ENCODE measurements at regions of chr3 and their contacts with region 1.

Region 1: GRCh38 chr3:49339945-49340800 is at the start of gene USP4:
- DNase-seq: peak; percentile 91 to 93 (median 91)
- H3K4me3 ChIP-seq: peak within 1 kb of the TSS; percentile 63 to 81
- H3K4me3 Mint-ChIP-seq: peak within 1 kb of the TSS; percentile 91 to 97 (median 94)
- H3K27ac ChIP-seq: peak within 1 kb of the TSS; percentile 92
- H3K27ac Mint-ChIP-seq: peak within 1 kb of the TSS; percentile 96 to 100 (median 98)
- H3K4me1 ChIP-seq: peaks cover 56% of the 10 kb centered on the region
- H3K4me1 Mint-ChIP-seq: peaks cover 27 to 51% (median 41%) of the 10 kb centered on the region in 4 donors
- H3K27me3 ChIP-seq: no peaks in the 10 kb centered on the region
- H3K27me3 Mint-ChIP-seq: no peaks in the 10 kb centered on the region
- total RNA-seq, gene USP4: 111 to 114 TPM

Region 2: DNA sequence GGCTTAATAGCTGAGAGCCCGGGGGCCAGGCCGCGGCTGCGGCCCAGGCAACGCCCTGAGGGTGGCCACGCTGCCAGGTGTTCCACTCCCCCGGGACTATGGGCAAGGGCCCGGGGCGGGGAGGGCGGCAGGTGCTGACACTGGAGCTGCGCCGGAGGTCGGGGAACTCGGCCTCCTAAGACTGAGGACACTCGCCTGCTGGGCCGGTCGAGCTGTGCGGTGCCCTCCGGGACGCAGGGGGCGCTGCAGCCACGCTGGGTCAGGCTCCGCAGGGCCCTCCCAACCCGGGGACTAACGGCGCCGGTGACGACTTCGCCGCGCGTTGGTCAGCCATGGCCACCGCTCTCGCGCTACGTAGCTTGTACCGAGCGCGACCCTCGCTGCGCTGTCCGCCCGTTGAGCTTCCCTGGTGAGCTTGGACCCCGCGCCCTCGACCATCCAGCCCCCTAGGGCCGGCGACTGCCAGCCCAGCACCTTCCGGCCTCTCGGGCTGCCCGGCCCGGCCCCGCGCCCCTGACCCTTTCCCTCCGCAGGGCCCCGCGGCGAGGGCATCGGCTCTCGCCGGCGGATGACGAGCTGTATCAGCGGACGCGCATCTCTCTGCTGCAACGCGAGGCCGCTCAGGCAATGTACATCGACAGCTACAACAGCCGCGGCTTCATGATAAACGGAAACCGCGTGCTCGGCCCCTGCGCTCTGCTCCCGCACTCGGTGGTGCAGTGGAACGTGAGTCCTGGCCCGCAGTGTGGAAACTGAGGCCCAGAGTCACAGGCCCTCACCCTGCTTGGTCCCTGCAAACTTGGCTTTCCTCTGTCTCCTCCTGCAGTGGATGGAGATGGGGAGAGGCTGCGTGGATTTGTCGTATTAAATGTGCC is 318.1 kb before region 1 on chr3 and contains the start of gene NDUFAF3:
- CTCF ChIA-PET with region 1: no interaction called
- POLR2A ChIA-PET with region 1: interaction called, 24 read pairs
- intact Hi-C with region 1: loop called (anchors 10 kb)
- DNase-seq: peak; percentile 89 to 91 (median 90)
- H3K4me3 ChIP-seq: peak within 1 kb of the TSS; percentile 65 to 98
- H3K4me3 Mint-ChIP-seq: peak within 1 kb of the TSS; percentile 94 to 98 (median 96)
- H3K27ac ChIP-seq: peak within 1 kb of the TSS; percentile 97
- H3K27ac Mint-ChIP-seq: peak within 1 kb of the TSS; percentile 93 to 99 (median 98)
- H3K4me1 ChIP-seq: peaks cover 43% of the 10 kb centered on the region
- H3K4me1 Mint-ChIP-seq: peaks cover 16 to 74% (median 41%) of the 10 kb centered on the region in 4 donors
- H3K27me3 ChIP-seq: no peaks in the 10 kb centered on the region
- H3K27me3 Mint-ChIP-seq: no peaks in the 10 kb centered on the region
- total RNA-seq, gene NDUFAF3: 77.9 to 85.7 TPM

Region 3: GRCh38 chr3:49351521-49352011 is 11.4 kb after region 1 on chr3:
- CTCF ChIA-PET with region 1: interaction called, 10 read pairs
- POLR2A ChIA-PET with region 1: interaction called, 139 read pairs
- intact Hi-C with region 1: loop called (anchors 1 kb)
- DNase-seq: no peak
- H3K4me3 ChIP-seq: no peak overlapping the region
- H3K4me3 Mint-ChIP-seq: peak overlapping the region in 5 of 8 donors; percentile 5 to 57 (median 16)
- H3K27ac ChIP-seq: no peak overlapping the region
- H3K27ac Mint-ChIP-seq: peak overlapping the region; percentile 36 to 84 (median 52)
- H3K4me1 ChIP-seq: peaks cover 13% of the 10 kb centered on the region
- H3K4me1 Mint-ChIP-seq: peaks cover 10 to 30% (median 19%) of the 10 kb centered on the region in 4 donors
- H3K27me3 ChIP-seq: no peaks in the 10 kb centered on the region
- H3K27me3 Mint-ChIP-seq: no peaks in the 10 kb centered on the region

Region 4: GRCh38 chr3:49406571-49407566 is 66.7 kb after region 1 on chr3:
- CTCF ChIA-PET with region 1: interaction called, 21 read pairs
- POLR2A ChIA-PET with region 1: interaction called, 179 read pairs
- intact Hi-C with region 1: loop called (anchors 1 kb)
- DNase-seq: no peak
- H3K4me3 ChIP-seq: no peak overlapping the region
- H3K4me3 Mint-ChIP-seq: peak overlapping the region in 7 of 8 donors; percentile 11 to 88 (median 77)
- H3K27ac ChIP-seq: no peak overlapping the region
- H3K27ac Mint-ChIP-seq: peak overlapping the region; percentile 78 to 89 (median 84)
- H3K4me1 ChIP-seq: peaks cover 70% of the 10 kb centered on the region
- H3K4me1 Mint-ChIP-seq: peaks cover 42 to 65% (median 50%) of the 10 kb centered on the region in 4 donors
- H3K27me3 ChIP-seq: no peaks in the 10 kb centered on the region
- H3K27me3 Mint-ChIP-seq: no peaks in the 10 kb centered on the region

Region 5: DNA sequence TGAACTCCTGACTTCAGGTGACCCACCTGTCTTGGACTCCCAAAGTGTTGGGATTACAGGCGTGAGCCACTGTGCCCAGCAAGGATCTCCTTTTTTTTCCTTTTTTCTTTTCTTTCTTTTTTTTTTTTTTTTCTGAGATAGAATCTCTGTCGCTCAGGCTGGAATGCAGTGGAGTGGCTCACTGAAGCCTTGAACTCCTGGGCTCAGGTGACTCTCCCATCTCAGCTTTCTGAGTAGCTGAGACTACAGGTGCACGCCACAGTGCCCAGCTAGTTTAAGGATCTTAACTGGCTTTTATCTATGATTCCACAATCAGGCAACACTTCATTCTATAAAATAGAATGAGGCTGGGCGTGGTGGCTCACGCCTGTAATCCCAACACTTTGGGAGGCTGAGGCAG is 105.2 kb after region 1 on chr3:
- CTCF ChIA-PET with region 1: interaction called, 147 read pairs
- POLR2A ChIA-PET with region 1: interaction called, 52 read pairs
- intact Hi-C with region 1: loop called (anchors 1 kb)
- DNase-seq: no peak
- H3K4me3 ChIP-seq: no peak overlapping the region
- H3K4me3 Mint-ChIP-seq: no peak overlapping the region
- H3K27ac ChIP-seq: no peak overlapping the region
- H3K27ac Mint-ChIP-seq: peak overlapping the region in 4 of 7 donors; percentile 61 to 82 (median 72)
- H3K4me1 ChIP-seq: peaks cover 20% of the 10 kb centered on the region
- H3K4me1 Mint-ChIP-seq: peaks cover 8 to 18% (median 11%) of the 10 kb centered on the region in 4 donors
- H3K27me3 ChIP-seq: no peaks in the 10 kb centered on the region
- H3K27me3 Mint-ChIP-seq: no peaks in the 10 kb centered on the region

Region 6: GRCh38 chr3:49673715-49674496 is 333.7 kb after region 1 on chr3 and contains the start of gene APEH:
- CTCF ChIA-PET with region 1: no interaction called
- POLR2A ChIA-PET with region 1: interaction called, 3 read pairs
- intact Hi-C with region 1: loop called (anchors 5 kb)
- DNase-seq: peak; percentile 98 to 99 (median 98)
- H3K4me3 ChIP-seq: peak within 1 kb of the TSS; percentile 48 to 75
- H3K4me3 Mint-ChIP-seq: peak within 1 kb of the TSS; percentile 90 to 99 (median 94)
- H3K27ac ChIP-seq: peak within 1 kb of the TSS; percentile 77
- H3K27ac Mint-ChIP-seq: peak within 1 kb of the TSS; percentile 97 to 99 (median 98)
- H3K4me1 ChIP-seq: peaks cover 32% of the 10 kb centered on the region
- H3K4me1 Mint-ChIP-seq: peaks cover 20 to 50% (median 34%) of the 10 kb centered on the region in 4 donors
- H3K27me3 ChIP-seq: no peaks in the 10 kb centered on the region
- H3K27me3 Mint-ChIP-seq: no peaks in the 10 kb centered on the region
- total RNA-seq, gene APEH: 130 to 136 TPM